ENCODE measurements at regions of chr3 and their contacts with region 1.

Region 1: GRCh38 chr3:149480325-149481017 is 6.0 kb downstream of the TM4SF4 start:
- DNase-seq: peak; percentile 74 to 88
- ATAC-seq: peak; percentile 92 to 97 (median 96)
- H3K4me3 ChIP-seq: no peak overlapping the region
- H3K27ac ChIP-seq: peak overlapping the region; percentile 12 to 89 (median 74)
- H3K4me1 ChIP-seq: peaks cover 0 to 20% (median 14%) of the 10 kb centered on the region in 9 donors
- H3K27me3 ChIP-seq: no peaks in the 10 kb centered on the region
- CTCF ChIP-seq: peak; percentile 71 to 97 (median 86)

Region 2: GRCh38 chr3:149058602-149059001 is 421.9 kb before region 1 on chr3:
- intact Hi-C with region 1: no loop called
- DNase-seq: no peak
- ATAC-seq: no peak
- H3K4me3 ChIP-seq: no peak overlapping the region
- H3K27ac ChIP-seq: no peak overlapping the region
- H3K4me1 ChIP-seq: no peaks in the 10 kb centered on the region
- H3K27me3 ChIP-seq: no peaks in the 10 kb centered on the region
- CTCF ChIP-seq: no peak

Region 3: DNA sequence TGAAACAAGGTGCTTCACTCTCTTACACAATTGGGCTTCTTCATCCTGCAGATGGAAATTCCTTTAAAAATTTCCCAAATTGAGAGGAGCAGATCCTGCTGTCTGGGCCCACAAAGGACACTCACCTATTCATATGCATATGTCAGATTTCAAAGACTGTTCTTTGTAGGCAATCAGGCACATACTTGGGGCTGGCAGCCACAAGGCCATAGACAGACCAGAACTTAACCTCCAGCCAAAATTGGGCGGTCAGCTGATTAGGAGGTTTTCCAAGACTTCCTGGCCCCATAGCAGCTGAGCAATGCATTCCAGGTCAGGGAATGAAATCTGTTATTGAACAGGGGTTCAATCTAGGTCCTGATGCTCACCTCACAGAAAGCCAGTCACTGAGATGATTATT is 366.0 kb before region 1 on chr3:
- intact Hi-C with region 1: loop called in 1 of 10 experiments (anchors 10 kb)
- DNase-seq: no peak
- ATAC-seq: peak in 2 of 8 donors; percentile 12 to 55
- H3K4me3 ChIP-seq: no peak overlapping the region
- H3K27ac ChIP-seq: no peak overlapping the region
- H3K4me1 ChIP-seq: peaks cover 0 to 8% (median 4%) of the 10 kb centered on the region in 9 donors
- H3K27me3 ChIP-seq: no peaks in the 10 kb centered on the region
- CTCF ChIP-seq: no peak

Region 4: GRCh38 chr3:149352556-149352955 is 127.9 kb before region 1 on chr3:
- intact Hi-C with region 1: loop called in 8 of 10 experiments (anchors 1 to 5 kb)
- DNase-seq: peak; percentile 48 to 57
- ATAC-seq: peak; percentile 65 to 86 (median 82)
- H3K4me3 ChIP-seq: no peak overlapping the region
- H3K27ac ChIP-seq: peak overlapping the region in 4 of 10 donors; percentile 13 to 42 (median 34)
- H3K4me1 ChIP-seq: peaks cover 0 to 21% (median 0%) of the 10 kb centered on the region in 9 donors
- H3K27me3 ChIP-seq: no peaks in the 10 kb centered on the region
- CTCF ChIP-seq: peak; percentile 32 to 81 (median 66)